CD4-positive, alpha-beta T cell (primary cell): ENCODE measurements at regions of chr10 and their contacts with region 1.

Region 1: GRCh38 chr10:6144406-6145165 is 55.8 kb downstream of the RBM17 start:
- DNase-seq: peak; percentile 71 to 94 (median 85)
- ATAC-seq: peak; percentile 90
- H3K4me3 ChIP-seq: peak overlapping the region; percentile 75
- H3K4me3 Mint-ChIP-seq: peak overlapping the region; percentile 89
- H3K27ac ChIP-seq: peak overlapping the region; percentile 70 to 77
- H3K27ac Mint-ChIP-seq: peak overlapping the region; percentile 90
- H3K4me1 ChIP-seq: peaks cover 89% of the 10 kb centered on the region
- H3K4me1 Mint-ChIP-seq: peaks cover 66% of the 10 kb centered on the region
- H3K27me3 ChIP-seq: no peaks in the 10 kb centered on the region
- H3K27me3 Mint-ChIP-seq: no peaks in the 10 kb centered on the region
- CTCF ChIP-seq: no peak

Region 2: GRCh38 chr10:5645375-5645774 is 499.2 kb before region 1 on chr10:
- CTCF ChIA-PET with region 1: no interaction called
- POLR2A ChIA-PET with region 1: no interaction called
- intact Hi-C with region 1: no loop called
- DNase-seq: no peak
- ATAC-seq: no peak
- H3K4me3 ChIP-seq: no peak overlapping the region
- H3K4me3 Mint-ChIP-seq: no peak overlapping the region
- H3K27ac ChIP-seq: no peak overlapping the region
- H3K27ac Mint-ChIP-seq: no peak overlapping the region
- H3K4me1 ChIP-seq: no peaks in the 10 kb centered on the region
- H3K4me1 Mint-ChIP-seq: no peaks in the 10 kb centered on the region
- H3K27me3 ChIP-seq: no peaks in the 10 kb centered on the region
- H3K27me3 Mint-ChIP-seq: no peaks in the 10 kb centered on the region
- CTCF ChIP-seq: no peak

Region 3: DNA sequence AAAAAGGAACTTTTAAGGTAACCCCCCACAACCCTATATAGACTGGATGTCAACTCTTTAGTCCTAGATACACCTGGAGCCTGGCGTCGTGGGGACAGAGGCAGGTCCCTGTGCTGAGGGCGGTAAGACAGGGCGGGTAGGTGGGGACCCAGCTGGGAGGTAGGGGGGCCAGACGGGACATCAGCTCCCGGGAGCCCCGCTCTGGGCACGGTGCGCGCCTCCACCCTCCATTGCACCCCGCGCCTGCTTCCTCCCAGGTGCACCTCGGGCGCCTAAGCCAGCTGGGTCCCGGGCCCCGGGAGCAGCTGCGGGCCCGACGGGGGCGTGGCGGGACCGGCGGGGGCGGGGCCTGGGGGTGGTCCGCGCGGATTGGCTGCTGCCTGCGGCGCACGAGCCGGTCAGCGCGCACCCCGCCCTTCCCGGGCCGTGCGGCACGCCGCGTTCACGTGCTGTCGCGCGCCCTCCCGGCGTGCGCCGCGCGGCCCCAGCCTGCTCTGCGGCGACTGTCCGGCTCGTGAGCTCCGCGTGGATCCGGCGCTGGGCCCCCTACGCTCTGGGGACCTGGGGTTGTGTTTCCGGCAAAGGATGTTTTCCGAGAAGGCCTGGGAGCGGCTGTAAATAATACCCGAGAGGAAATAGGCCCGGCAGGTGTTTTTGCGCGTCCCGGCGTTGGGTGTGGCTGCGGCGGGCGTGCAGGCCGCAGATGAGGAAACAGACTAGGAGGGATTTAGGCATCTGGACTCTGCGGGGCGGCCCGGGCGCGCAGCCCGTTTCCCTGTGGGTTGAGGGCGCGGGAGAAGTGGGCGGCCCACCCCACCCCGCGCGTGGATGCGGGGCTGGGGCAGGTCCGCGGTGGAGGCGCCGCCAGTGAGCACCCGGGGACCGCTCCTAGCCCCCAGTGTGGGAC is 19.0 kb after region 1 on chr10:
- CTCF ChIA-PET with region 1: no interaction called
- POLR2A ChIA-PET with region 1: interaction called, 71 read pairs
- intact Hi-C with region 1: loop called (anchors 2 kb)
- DNase-seq: peak; percentile 83 to 97 (median 92)
- ATAC-seq: peak; percentile 86
- H3K4me3 ChIP-seq: peak overlapping the region; percentile 71
- H3K4me3 Mint-ChIP-seq: peak overlapping the region; percentile 90
- H3K27ac ChIP-seq: peak overlapping the region; percentile 91 to 93
- H3K27ac Mint-ChIP-seq: peak overlapping the region; percentile 94
- H3K4me1 ChIP-seq: peaks cover 42% of the 10 kb centered on the region
- H3K4me1 Mint-ChIP-seq: peaks cover 47% of the 10 kb centered on the region
- H3K27me3 ChIP-seq: no peaks in the 10 kb centered on the region
- H3K27me3 Mint-ChIP-seq: no peaks in the 10 kb centered on the region
- CTCF ChIP-seq: no peak

Region 4: DNA sequence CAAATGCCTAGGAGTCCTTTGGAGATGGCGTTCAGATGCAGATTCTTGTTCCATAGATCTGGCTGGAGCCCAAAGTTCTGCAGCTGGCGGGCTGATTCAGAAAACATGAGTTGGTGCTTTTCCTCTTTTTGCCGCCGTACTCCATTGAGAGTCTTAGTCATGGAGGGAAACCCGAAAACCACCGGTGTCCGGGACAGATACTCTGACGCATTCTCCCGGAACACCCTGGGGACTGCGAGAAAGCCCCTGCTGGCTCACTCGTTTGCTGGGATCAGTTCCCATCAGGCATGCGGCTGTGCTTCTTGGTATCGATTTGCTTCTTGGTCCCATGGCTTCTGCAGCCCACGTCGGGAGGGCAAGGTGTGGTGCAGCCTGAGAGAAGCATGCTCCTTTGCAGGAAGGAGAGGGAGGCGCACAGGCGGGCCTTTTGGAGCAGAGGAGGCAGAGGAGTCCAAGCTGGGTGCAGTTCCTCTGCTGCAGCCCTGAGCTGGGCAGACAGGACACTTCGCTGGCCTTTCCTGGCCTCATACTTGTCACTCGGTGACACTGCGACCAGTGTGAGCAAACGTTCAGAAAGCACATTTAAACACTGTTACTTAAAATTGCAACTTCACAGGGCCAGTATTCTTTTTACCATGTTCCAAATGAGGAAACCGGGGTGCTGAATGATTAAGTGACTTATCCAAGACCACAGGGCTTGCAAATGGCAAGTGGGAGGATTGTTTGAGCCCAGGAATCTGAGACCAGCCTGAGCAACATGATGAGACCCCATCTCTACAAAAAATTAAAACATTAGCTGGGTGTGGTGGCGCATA is 27.5 kb after region 1 on chr10:
- CTCF ChIA-PET with region 1: interaction called, 5 read pairs
- POLR2A ChIA-PET with region 1: interaction called, 10 read pairs
- intact Hi-C with region 1: no loop called
- DNase-seq: peak in 4 of 14 experiments; percentile 15 to 76 (median 57)
- ATAC-seq: no peak
- H3K4me3 ChIP-seq: no peak overlapping the region
- H3K4me3 Mint-ChIP-seq: peak overlapping the region; percentile 18
- H3K27ac ChIP-seq: no peak overlapping the region
- H3K27ac Mint-ChIP-seq: peak overlapping the region; percentile 83
- H3K4me1 ChIP-seq: peaks cover 84% of the 10 kb centered on the region
- H3K4me1 Mint-ChIP-seq: peaks cover 85% of the 10 kb centered on the region
- H3K27me3 ChIP-seq: no peaks in the 10 kb centered on the region
- H3K27me3 Mint-ChIP-seq: no peaks in the 10 kb centered on the region
- CTCF ChIP-seq: no peak

Region 5: DNA sequence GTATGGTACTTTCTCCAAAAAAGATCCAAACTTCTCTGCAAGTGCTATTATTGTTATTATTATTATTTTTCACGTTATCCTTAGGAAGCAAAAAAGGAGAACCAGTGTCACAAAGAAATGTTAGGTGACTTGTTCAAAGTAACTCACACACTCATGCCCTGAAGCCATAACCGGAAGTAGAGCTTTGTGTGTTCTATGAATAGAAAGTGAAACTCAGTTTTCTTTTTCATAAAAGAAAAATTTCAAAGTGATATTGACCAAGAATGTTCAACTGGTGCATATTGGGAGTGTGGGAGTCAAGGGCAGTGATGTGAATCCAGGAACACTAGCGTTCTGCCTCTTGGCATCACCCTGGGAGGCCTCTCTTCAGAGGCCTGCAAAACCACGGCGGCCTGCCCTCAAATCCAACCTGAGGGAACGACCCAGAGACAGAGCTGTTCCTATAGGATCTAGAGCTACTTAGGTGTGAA is 329.4 kb after region 1 on chr10:
- CTCF ChIA-PET with region 1: no interaction called
- POLR2A ChIA-PET with region 1: no interaction called
- intact Hi-C with region 1: no loop called
- DNase-seq: peak in 6 of 14 experiments; percentile 25 to 85 (median 56)
- ATAC-seq: peak; percentile 75
- H3K4me3 ChIP-seq: peak overlapping the region; percentile 47
- H3K4me3 Mint-ChIP-seq: peak overlapping the region; percentile 83
- H3K27ac ChIP-seq: peak overlapping the region; percentile 69 to 75
- H3K27ac Mint-ChIP-seq: peak overlapping the region; percentile 95
- H3K4me1 ChIP-seq: peaks cover 23% of the 10 kb centered on the region
- H3K4me1 Mint-ChIP-seq: peaks cover 65% of the 10 kb centered on the region
- H3K27me3 ChIP-seq: no peaks in the 10 kb centered on the region
- H3K27me3 Mint-ChIP-seq: no peaks in the 10 kb centered on the region
- CTCF ChIP-seq: no peak

Region 6: DNA sequence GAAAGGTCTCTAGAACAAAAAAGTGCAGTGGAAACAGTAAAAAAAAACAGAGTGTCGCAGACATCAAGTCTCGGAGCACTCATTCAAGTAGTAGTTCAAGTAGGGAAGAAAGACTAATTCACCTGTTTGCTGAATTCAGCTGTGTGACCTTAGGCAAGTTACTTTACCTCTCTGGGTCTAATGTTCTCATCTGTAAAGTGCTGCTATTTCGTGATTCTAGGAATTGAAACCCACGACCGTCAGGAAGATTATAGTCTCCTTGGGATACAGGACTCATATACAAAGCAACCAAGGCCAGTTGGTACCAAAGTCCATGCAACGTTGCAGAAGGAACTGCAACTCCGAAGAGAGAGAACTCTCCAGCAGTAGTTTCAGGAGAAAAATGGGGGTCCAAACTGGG is 409.4 kb after region 1 on chr10:
- CTCF ChIA-PET with region 1: no interaction called
- POLR2A ChIA-PET with region 1: no interaction called
- intact Hi-C with region 1: no loop called
- DNase-seq: no peak
- ATAC-seq: no peak
- H3K4me3 ChIP-seq: no peak overlapping the region
- H3K4me3 Mint-ChIP-seq: no peak overlapping the region
- H3K27ac ChIP-seq: peak overlapping the region in 1 of 2 donors; percentile 7
- H3K27ac Mint-ChIP-seq: peak overlapping the region; percentile 81
- H3K4me1 ChIP-seq: peaks cover 49% of the 10 kb centered on the region
- H3K4me1 Mint-ChIP-seq: peaks cover 86% of the 10 kb centered on the region
- H3K27me3 ChIP-seq: no peaks in the 10 kb centered on the region
- H3K27me3 Mint-ChIP-seq: no peaks in the 10 kb centered on the region
- CTCF ChIP-seq: no peak